ENCODE measurements at regions of chr17 and their contacts with region 1.

Region 1: GRCh38 chr17:64145757-64146417 is 15.9 kb upstream of the ERN1 start:
- DNase-seq: peak; percentile 96 to 99
- H3K4me3 ChIP-seq: peak overlapping the region; percentile 76 to 90
- H3K27ac ChIP-seq: peak overlapping the region; percentile 85 to 93
- H3K4me1 ChIP-seq: peaks cover 0 to 17% of the 10 kb centered on the region in 2 donors
- H3K27me3 ChIP-seq: no peaks in the 10 kb centered on the region
- CTCF ChIP-seq: no peak

Region 2: DNA sequence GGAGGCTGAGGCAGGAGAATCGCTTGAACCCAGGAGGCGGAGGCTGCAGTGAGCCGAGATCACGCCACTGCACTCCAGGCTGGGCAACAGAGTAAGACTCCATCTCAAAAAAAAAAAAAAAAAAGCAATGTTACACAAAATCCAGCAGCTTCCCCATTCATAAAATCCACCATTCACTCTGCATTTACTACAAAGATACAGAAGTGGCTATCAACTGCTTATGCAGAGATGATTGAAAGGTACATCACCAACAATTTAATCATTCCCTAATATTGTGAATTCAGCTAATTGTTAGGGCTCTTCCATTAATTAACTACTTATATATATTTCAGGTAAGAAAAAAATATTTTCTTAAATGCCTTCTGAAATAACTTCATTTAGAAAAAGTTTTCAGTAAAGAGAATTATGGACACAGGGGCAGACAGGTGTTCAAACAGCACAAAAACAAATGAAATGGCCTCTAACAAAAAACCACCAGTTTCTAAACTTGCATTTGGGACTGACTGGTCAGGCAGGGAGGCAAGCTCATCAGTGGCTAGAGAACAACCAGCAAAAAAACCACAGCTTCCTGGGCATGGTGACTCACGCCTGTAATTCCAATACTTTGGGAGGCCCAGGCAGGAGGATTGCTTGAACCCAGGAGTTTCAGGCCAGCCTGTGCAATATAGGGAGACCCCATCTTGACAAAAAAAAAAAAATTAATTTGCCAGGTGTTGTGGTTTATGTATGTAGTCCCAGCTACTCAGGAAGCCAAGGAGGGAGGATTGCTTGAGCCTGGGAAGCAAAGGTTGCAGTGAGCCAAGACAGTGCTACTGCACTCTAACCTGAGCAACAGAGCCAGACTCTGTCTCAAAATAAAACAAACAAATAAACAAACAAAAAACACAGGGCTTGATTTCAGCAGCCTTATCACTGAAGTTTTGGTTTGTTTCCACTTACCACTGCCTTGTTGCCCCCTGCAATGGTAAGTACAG is 42.2 kb before region 1 on chr17:
- intact Hi-C with region 1: no loop called
- DNase-seq: no peak
- H3K4me3 ChIP-seq: no peak overlapping the region
- H3K27ac ChIP-seq: no peak overlapping the region
- H3K4me1 ChIP-seq: no peaks in the 10 kb centered on the region
- H3K27me3 ChIP-seq: no peaks in the 10 kb centered on the region
- CTCF ChIP-seq: no peak

Region 3: GRCh38 chr17:64129764-64130558 is 15.9 kb before region 1 on chr17 and contains the start of gene ERN1:
- intact Hi-C with region 1: loop called (anchors 1 kb)
- DNase-seq: peak; percentile 73 to 97
- H3K4me3 ChIP-seq: peak within 1 kb of the TSS; percentile 94 to 96
- H3K27ac ChIP-seq: peak within 1 kb of the TSS; percentile 98 to 100
- H3K4me1 ChIP-seq: peaks cover 3 to 16% of the 10 kb centered on the region in 2 donors
- H3K27me3 ChIP-seq: no peaks in the 10 kb centered on the region
- CTCF ChIP-seq: peak in 2 of 3 experiments; percentile 10 to 13
- total RNA-seq, gene ERN1: 26.5 TPM

Region 4: DNA sequence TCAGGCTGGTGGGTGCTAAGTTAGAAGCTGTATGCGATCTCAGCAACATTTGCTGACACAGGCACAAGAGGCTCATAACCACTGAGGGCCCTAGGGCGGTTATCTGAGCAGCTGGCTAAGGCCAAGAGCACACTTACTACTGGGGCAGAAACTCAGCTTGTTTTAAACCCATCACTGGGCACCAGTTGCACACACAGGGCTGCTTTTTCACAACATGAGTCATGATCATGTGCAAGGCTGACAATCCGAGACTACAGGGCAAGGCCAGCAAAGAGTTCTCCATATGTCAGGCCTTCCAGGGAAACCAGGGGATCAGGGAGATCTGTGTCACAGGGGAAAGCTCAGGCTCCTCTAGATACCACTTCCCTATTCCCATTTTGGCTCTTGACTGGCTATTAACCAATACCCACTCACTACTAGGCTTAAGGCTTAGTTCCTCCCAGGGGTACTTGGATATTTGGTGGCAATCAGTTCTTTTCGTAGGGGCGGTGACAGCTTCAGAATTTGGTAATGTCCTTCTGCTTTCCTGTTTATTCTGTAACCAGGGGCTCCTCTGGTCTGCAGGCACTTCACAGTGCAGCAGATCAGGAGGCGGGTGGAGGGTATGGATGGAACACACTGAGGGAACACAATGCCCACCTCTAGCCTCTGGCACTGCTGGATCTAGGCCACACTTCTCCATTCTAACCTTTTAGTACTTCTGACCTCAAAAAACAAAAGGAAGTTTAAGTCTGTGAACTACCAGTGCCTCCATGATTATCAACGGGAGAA is 29.0 kb after region 1 on chr17:
- intact Hi-C with region 1: loop called (anchors 2 kb)
- DNase-seq: peak; percentile 33 to 79
- H3K4me3 ChIP-seq: no peak overlapping the region
- H3K27ac ChIP-seq: peak overlapping the region; percentile 84 to 85
- H3K4me1 ChIP-seq: peaks cover 14 to 48% of the 10 kb centered on the region in 2 donors
- H3K27me3 ChIP-seq: no peaks in the 10 kb centered on the region
- CTCF ChIP-seq: no peak

Region 5: GRCh38 chr17:64212122-64212521 is 66.2 kb after region 1 on chr17:
- intact Hi-C with region 1: no loop called
- DNase-seq: no peak
- H3K4me3 ChIP-seq: no peak overlapping the region
- H3K27ac ChIP-seq: no peak overlapping the region
- H3K4me1 ChIP-seq: peaks cover 10 to 20% of the 10 kb centered on the region in 2 donors
- H3K27me3 ChIP-seq: no peaks in the 10 kb centered on the region
- CTCF ChIP-seq: no peak

Region 6: GRCh38 chr17:64240741-64241347 is 95.0 kb after region 1 on chr17:
- intact Hi-C with region 1: loop called (anchors 2 kb)
- DNase-seq: peak; percentile 28 to 87
- H3K4me3 ChIP-seq: peak overlapping the region in 1 of 2 donors; percentile 18
- H3K27ac ChIP-seq: peak overlapping the region; percentile 72 to 81
- H3K4me1 ChIP-seq: peaks cover 7 to 27% of the 10 kb centered on the region in 2 donors
- H3K27me3 ChIP-seq: no peaks in the 10 kb centered on the region
- CTCF ChIP-seq: no peak

Region 7: GRCh38 chr17:64262417-64263260 is 116.8 kb after region 1 on chr17 and contains the start of gene TEX2:
- intact Hi-C with region 1: loop called (anchors 1 kb)
- DNase-seq: peak in 1 of 2 donors; percentile 79
- H3K4me3 ChIP-seq: peak within 1 kb of the TSS; percentile 92 to 98
- H3K27ac ChIP-seq: peak within 1 kb of the TSS; percentile 90 to 93
- H3K4me1 ChIP-seq: peaks cover 0 to 23% of the 10 kb centered on the region in 2 donors
- H3K27me3 ChIP-seq: no peaks in the 10 kb centered on the region
- CTCF ChIP-seq: no peak
- total RNA-seq, gene TEX2: 94.6 TPM

Region 8: DNA sequence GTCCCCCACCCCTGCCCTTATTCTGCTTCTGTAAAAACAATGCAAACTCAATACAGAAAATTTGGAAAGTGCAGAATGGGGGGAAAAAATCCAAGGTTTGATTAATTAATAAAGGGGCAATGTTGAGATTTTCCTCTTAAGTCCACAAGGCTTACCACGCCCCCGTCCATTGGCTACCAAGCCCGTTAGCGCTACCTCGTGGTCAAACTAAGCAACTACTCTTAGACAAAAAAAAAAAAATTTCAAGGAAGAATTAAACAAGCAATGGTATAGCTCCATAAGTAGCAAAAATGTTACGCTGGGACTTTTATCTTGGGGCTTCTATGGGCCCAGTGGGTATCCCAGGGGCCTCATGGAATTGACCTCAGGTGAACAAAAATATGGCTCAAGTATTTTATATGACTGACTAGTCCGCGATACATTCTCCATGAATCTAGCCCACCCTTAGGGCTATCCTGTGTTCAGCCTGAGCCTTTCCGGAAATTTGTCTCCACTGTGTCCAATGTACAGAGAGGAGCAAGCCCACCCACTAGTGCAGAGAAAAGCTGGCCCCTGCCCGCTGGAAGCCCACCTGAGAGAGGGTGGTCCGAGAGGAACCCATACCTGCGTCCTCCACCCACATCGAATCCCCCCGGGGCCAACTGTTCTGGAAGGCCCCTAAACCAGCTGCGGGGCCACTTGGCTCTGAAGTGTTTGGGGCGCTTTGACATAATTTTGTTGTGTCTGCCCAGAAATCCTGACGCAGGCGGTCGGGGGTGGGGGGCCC is 136.3 kb after region 1 on chr17:
- intact Hi-C with region 1: loop called (anchors 2 kb)
- DNase-seq: peak in 1 of 2 donors; percentile 72
- H3K4me3 ChIP-seq: no peak overlapping the region
- H3K27ac ChIP-seq: no peak overlapping the region
- H3K4me1 ChIP-seq: no peaks in the 10 kb centered on the region
- H3K27me3 ChIP-seq: no peaks in the 10 kb centered on the region
- CTCF ChIP-seq: peak; percentile 71 to 85 (median 73)

Region 9: GRCh38 chr17:64506576-64507477 is 360.9 kb after region 1 on chr17 and contains the start of gene CEP95:
- intact Hi-C with region 1: loop called (anchors 10 kb)
- DNase-seq: peak; percentile 76 to 98
- H3K4me3 ChIP-seq: peak within 1 kb of the TSS; percentile 91 to 99
- H3K27ac ChIP-seq: peak within 1 kb of the TSS; percentile 99 to 100
- H3K4me1 ChIP-seq: peaks cover 10 to 41% of the 10 kb centered on the region in 2 donors
- H3K27me3 ChIP-seq: no peaks in the 10 kb centered on the region
- CTCF ChIP-seq: peak in 1 of 3 experiments; percentile 47
- total RNA-seq, gene CEP95: 6.9 TPM